ENCODE measurements at regions of chr20 and their contacts with region 1.

Region 1: GRCh38 chr20:60765821-60766403 is 486.1 kb upstream of the CDH4 start:
- DNase-seq: no peak
- H3K4me3 ChIP-seq: no peak overlapping the region
- H3K27ac ChIP-seq: no peak overlapping the region
- H3K4me1 ChIP-seq: no peaks in the 10 kb centered on the region
- H3K27me3 ChIP-seq: no peaks in the 10 kb centered on the region
- CTCF ChIP-seq: no peak
- EP300 ChIP-seq: no peak
- POLR2A ChIP-seq: no peak

Region 2: GRCh38 chr20:59334651-59335300 is 1431.1 kb before region 1 on chr20:
- intact Hi-C with region 1: loop called in 1 of 4 experiments (anchors 10 kb)
- DNase-seq: no peak
- H3K4me3 ChIP-seq: no peak overlapping the region
- H3K27ac ChIP-seq: no peak overlapping the region
- H3K4me1 ChIP-seq: no peaks in the 10 kb centered on the region
- H3K27me3 ChIP-seq: no peaks in the 10 kb centered on the region
- CTCF ChIP-seq: no peak
- EP300 ChIP-seq: no peak
- POLR2A ChIP-seq: no peak